Activated CD8-positive, alpha-beta T cell treated with anti-CD3 and anti-CD28 coated beads, Interleukin-2, amount 10 ng/mL, durations not matched to agents 7 days and 5 days (primary cell): ENCODE measurements at regions of chr1 and their contacts with region 1.

Region 1: DNA sequence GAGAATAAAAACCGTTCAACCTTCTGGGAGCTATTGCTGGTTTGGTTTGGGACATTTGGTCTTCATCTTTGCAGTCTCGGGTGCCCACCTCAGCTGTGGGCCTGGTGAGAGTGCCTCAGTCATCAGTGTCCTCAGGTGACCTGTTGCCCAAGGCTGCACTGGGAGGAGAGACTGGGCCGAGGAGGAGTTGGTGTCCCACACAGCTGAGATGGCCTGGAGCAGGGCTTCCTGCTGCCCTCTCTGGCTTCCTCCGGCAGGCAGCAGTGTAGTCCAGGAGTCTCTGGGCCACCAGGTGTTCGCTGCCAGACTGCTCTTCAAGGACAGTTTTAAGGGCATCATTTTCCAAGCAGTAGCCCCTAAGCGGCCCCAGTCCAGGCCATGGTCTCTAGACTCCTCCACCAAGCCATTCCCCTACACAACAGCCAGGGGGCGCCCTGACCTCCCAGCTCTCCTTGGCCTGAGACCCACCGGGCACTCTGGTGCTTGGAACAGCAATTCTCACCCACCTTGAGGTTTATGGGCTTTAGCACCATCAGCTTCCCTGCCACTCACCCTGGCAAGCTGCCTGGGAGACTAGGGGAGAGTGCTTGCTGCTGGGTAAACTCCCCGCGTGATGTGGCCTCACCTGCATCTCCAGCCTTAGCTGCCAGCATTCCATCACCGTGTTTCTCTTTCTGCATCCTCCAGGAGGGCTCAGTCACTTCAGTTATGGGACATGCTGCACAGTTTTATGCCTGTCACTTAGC is 9.1 kb upstream of the SYTL1 start:
- DNase-seq: peak; percentile 72
- ATAC-seq: peak; percentile 88
- H3K4me3 Mint-ChIP-seq: no peak overlapping the region
- H3K27ac Mint-ChIP-seq: peak overlapping the region; percentile 60
- H3K4me1 Mint-ChIP-seq: peaks cover 25% of the 10 kb centered on the region
- H3K27me3 Mint-ChIP-seq: no peaks in the 10 kb centered on the region

Region 2: DNA sequence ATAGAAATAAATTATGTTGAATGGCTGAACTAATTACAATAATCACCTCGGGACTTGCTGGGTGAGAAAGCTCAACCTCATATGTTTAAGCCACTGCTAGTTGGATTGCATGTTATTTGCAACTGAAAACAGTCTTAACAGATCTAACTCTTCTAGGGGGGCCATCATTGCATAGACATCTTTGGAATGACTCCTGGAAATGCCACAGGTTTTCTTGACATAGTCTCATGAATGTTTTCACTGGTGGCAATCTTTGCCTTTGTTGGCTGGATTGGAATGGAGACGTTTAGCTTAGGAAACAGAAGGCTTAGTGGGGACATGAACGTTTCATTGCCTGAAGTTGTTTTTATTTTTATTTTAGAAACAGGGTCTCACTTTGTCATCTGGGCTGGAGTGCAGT is 107.1 kb before region 1 on chr1:
- CTCF ChIA-PET with region 1: no interaction called
- POLR2A ChIA-PET with region 1: no interaction called
- DNase-seq: no peak
- ATAC-seq: no peak
- H3K4me3 Mint-ChIP-seq: no peak overlapping the region
- H3K27ac Mint-ChIP-seq: no peak overlapping the region
- H3K4me1 Mint-ChIP-seq: no peaks in the 10 kb centered on the region
- H3K27me3 Mint-ChIP-seq: peaks cover 7% of the 10 kb centered on the region

Region 3: DNA sequence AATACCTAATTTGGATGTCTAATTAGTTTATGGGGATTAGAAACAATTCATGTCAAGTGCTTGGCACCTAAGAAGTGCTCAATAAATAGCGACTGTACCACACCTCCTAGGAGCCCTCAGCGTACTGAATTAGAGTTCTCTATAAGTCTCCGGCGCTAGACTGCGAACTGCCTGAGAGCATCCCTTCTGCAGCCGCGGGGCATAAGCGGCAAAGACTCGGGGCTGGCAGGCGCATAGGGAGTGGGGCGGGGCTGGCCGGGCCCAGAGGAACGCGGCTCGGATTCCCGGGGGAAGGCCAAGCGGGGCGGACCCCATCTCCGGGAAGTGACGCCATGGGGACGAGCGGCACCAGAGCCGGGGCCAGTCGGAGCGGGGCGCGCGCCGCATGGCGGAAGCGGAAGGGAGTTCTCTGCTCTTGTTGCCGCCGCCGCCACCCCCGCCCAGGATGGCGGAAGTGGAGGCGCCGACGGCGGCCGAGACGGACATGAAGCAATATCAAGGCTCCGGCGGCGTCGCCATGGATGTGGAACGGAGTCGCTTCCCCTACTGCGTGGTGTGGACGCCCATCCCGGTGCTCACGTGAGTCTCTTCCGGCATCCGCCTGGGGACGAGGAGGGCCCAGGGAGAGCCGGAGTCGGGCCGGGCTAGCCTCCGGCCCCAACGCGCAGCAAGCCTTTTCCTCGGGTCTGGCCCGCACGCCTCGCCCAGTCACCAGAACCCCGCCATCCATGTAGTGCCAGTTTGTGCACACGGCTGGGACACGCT is 10.7 kb before region 1 on chr1 and contains the start of gene TMEM222:
- CTCF ChIA-PET with region 1: interaction called, 40 read pairs
- POLR2A ChIA-PET with region 1: interaction called, 6 read pairs
- DNase-seq: peak; percentile 97
- ATAC-seq: peak; percentile 97
- H3K4me3 Mint-ChIP-seq: peak within 1 kb of the TSS; percentile 98
- H3K27ac Mint-ChIP-seq: peak within 1 kb of the TSS; percentile 97
- H3K4me1 Mint-ChIP-seq: peaks cover 37% of the 10 kb centered on the region
- H3K27me3 Mint-ChIP-seq: peaks cover 4% of the 10 kb centered on the region
- total RNA-seq, gene TMEM222: 35.2 to 38.5 TPM

Region 4: DNA sequence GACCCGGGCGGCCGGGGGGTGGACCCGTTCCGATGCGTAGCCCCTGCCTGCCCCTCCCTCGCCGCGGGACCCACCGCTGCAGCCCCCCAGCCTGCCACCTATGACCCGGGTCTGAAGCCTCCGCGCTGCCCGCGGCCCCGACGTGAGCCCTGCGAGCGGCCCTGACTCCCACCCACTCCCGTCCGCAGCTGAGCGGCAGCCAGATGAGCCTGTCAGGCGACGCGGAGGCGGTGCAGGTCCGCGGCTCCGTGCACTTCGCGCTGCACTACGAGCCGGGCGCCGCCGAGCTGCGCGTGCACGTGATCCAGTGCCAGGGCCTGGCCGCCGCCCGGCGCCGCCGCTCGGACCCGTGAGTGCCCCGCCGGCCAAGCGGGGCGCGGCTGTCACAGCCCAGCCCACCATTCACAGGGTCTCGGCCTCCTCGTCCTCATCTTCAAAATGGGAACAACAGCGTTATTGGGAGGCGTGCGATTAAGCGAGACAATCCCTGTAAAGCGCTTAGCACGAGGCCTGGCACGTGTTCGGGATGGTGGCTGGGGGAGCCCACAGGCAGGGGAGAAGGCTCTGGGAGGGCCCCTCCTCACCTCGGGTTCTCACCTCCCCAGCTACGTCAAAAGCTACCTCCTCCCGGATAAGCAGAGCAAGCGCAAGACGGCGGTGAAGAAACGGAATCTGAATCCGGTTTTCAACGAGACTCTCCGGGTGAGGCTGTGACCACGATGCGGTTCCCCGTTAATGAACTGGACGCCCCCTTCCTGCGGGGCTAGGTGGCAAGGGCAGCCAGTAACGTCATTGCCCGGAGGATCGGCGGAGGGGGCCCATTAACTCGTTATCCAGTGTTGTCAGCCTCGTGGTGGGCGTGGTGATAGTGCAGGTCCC is 17.3 kb after region 1 on chr1:
- CTCF ChIA-PET with region 1: interaction called, 16 read pairs
- POLR2A ChIA-PET with region 1: no interaction called
- DNase-seq: no peak
- ATAC-seq: no peak
- H3K4me3 Mint-ChIP-seq: no peak overlapping the region
- H3K27ac Mint-ChIP-seq: no peak overlapping the region
- H3K4me1 Mint-ChIP-seq: peaks cover 12% of the 10 kb centered on the region
- H3K27me3 Mint-ChIP-seq: no peaks in the 10 kb centered on the region

Region 5: DNA sequence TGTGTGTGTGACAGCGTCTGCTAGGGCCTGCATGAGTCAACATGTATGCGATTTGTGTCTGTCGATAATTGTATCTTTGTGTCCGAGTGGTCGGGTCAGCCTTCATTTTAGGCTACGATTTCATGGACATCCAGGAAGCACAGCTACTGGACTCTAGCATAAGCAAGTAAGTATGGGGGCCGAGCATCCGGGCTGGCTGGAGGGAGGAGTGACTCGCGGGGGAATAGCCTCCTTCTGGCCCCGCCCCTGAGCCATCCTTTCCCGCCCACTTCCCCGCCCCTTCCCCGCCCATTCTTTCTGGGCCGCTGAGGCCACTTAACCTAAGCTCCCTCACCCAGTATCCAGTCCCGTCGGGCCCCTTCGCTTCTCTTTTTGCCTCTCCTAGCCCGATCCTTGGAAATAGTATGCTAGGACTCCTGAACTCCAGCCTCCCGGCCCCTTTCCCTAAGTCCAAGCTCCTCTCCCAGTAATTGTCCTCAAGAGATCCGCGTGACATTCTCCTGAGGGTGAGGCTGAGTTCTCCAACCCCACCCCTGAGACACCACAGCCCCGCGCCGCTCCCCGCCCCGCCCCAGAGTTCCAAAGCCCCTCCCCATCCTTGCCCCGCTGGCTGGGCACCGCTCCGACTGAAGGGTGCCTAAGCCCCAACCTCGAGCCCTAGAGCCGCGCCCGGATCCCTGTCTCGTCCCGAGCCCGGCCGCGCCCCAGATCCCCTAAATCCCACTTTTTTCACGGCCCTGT is 32.8 kb after region 1 on chr1:
- CTCF ChIA-PET with region 1: interaction called, 21 read pairs
- POLR2A ChIA-PET with region 1: no interaction called
- DNase-seq: peak; percentile 88
- ATAC-seq: peak; percentile 74
- H3K4me3 Mint-ChIP-seq: peak overlapping the region; percentile 84
- H3K27ac Mint-ChIP-seq: peak overlapping the region; percentile 84
- H3K4me1 Mint-ChIP-seq: peaks cover 55% of the 10 kb centered on the region
- H3K27me3 Mint-ChIP-seq: no peaks in the 10 kb centered on the region

Region 6: GRCh38 chr1:27392096-27392777 is 59.5 kb after region 1 on chr1 and contains the start of gene GPR3:
- CTCF ChIA-PET with region 1: interaction called, 49 read pairs
- POLR2A ChIA-PET with region 1: no interaction called
- DNase-seq: peak; percentile 95
- ATAC-seq: peak; percentile 94
- H3K4me3 Mint-ChIP-seq: peak within 1 kb of the TSS; percentile 74
- H3K27ac Mint-ChIP-seq: peak within 1 kb of the TSS; percentile 82
- H3K4me1 Mint-ChIP-seq: peaks cover 25% of the 10 kb centered on the region
- H3K27me3 Mint-ChIP-seq: peaks cover 12% of the 10 kb centered on the region
- total RNA-seq, gene GPR3: 0.47 to 0.66 TPM